Activated T-helper 1 cell treated with anti-CD3 and anti-CD28 coated beads, Interleukin-12 subunit alpha, Interleukin-12 subunit beta, Interleukin-2, Interleukin-4 antibody, amounts not matched to agents 30 ng/mL and 10 ng/mL and 1 ng/mL, durations not matched to agents 14 hours and 24 hours and 36 hours (primary cell): ENCODE measurements at regions of chr5 and their contacts with region 1.

Region 1: GRCh38 chr5:39217365-39218281 is 1.7 kb downstream of the FYB1 start:
- DNase-seq: peak; percentile 70
- H3K4me3 Mint-ChIP-seq: peak overlapping the region; percentile 74
- H3K27ac Mint-ChIP-seq: peak overlapping the region; percentile 78
- H3K4me1 Mint-ChIP-seq: peaks cover 59% of the 10 kb centered on the region
- H3K27me3 Mint-ChIP-seq: no peaks in the 10 kb centered on the region

Region 2: GRCh38 chr5:38968665-38969064 is 249.0 kb before region 1 on chr5:
- intact Hi-C with region 1: no loop called
- DNase-seq: no peak
- H3K4me3 Mint-ChIP-seq: no peak overlapping the region
- H3K27ac Mint-ChIP-seq: no peak overlapping the region
- H3K4me1 Mint-ChIP-seq: no peaks in the 10 kb centered on the region
- H3K27me3 Mint-ChIP-seq: no peaks in the 10 kb centered on the region

Region 3: GRCh38 chr5:39074016-39074886 is 143.4 kb before region 1 on chr5 and contains the start of gene RICTOR:
- intact Hi-C with region 1: loop called (anchors 1 kb)
- DNase-seq: peak; percentile 88
- H3K4me3 Mint-ChIP-seq: peak within 1 kb of the TSS; percentile 94
- H3K27ac Mint-ChIP-seq: peak within 1 kb of the TSS; percentile 95
- H3K4me1 Mint-ChIP-seq: peaks cover 52% of the 10 kb centered on the region
- H3K27me3 Mint-ChIP-seq: peaks cover 11% of the 10 kb centered on the region
- total RNA-seq, gene RICTOR: 30.1 and 33.9 TPM in 2 replicates

Region 4: GRCh38 chr5:39177631-39177964 is 40.0 kb before region 1 on chr5:
- intact Hi-C with region 1: loop called (anchors 1 kb)
- DNase-seq: no peak
- H3K4me3 Mint-ChIP-seq: peak overlapping the region; percentile 78
- H3K27ac Mint-ChIP-seq: peak overlapping the region; percentile 77
- H3K4me1 Mint-ChIP-seq: peaks cover 89% of the 10 kb centered on the region
- H3K27me3 Mint-ChIP-seq: no peaks in the 10 kb centered on the region

Region 5: DNA sequence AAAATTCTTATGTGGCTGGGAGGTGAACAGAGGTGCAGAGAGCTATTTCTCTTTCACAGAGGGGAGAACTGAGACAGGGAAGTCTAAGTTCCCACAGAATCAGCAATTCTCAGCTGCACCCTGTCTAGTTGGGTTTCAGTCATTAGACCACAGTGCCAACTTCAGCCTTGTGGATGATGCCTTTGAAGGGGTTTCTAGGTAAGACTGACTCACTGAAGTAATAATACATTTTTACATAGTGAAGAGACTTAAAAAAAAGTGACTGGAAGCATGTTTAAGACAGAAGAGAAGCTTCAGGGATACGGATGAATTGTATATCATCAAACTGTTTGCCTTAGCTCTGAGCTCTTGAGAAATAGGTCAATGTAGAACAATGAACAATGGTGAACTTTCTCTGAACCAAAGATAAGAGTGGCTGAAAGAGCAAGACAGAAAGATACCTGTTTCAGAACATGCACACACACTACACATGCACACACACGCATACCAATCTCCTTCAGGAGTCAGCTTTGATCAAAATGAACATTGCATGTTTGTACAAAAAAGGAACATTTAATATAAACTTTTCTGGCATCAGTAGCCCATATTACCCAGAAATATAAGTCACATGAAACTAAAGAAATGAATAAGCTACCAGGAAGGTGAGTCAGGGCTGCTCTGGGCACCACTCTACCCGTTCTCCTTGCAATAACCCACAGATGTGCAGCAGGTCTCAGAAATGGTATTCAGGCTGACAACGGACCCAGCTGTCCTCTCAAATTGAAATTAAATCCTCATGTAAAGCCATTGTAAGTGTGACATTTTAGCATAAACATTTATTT is 14.3 kb after region 1 on chr5:
- intact Hi-C with region 1: loop called (anchors 2 kb)
- DNase-seq: no peak
- H3K4me3 Mint-ChIP-seq: no peak overlapping the region
- H3K27ac Mint-ChIP-seq: peak overlapping the region; percentile 42
- H3K4me1 Mint-ChIP-seq: peaks cover 12% of the 10 kb centered on the region
- H3K27me3 Mint-ChIP-seq: no peaks in the 10 kb centered on the region

Region 6: GRCh38 chr5:39283231-39283818 is 65.7 kb after region 1 on chr5:
- intact Hi-C with region 1: loop called (anchors 1 kb)
- DNase-seq: peak; percentile 54
- H3K4me3 Mint-ChIP-seq: no peak overlapping the region
- H3K27ac Mint-ChIP-seq: no peak overlapping the region
- H3K4me1 Mint-ChIP-seq: peaks cover 22% of the 10 kb centered on the region
- H3K27me3 Mint-ChIP-seq: peaks cover 12% of the 10 kb centered on the region

Region 7: GRCh38 chr5:39570403-39571027 is 352.9 kb after region 1 on chr5:
- intact Hi-C with region 1: loop called (anchors 1 kb)
- DNase-seq: no peak
- H3K4me3 Mint-ChIP-seq: no peak overlapping the region
- H3K27ac Mint-ChIP-seq: no peak overlapping the region
- H3K4me1 Mint-ChIP-seq: no peaks in the 10 kb centered on the region
- H3K27me3 Mint-ChIP-seq: peaks cover 6% of the 10 kb centered on the region